ENCODE measurements at regions of chr4 and their contacts with region 1.

Region 1: GRCh38 chr4:118981839-118982381 is 93.3 kb downstream of the SYNPO2 start:
- DNase-seq: peak; percentile 96
- ATAC-seq: peak; percentile 89
- H3K4me3 ChIP-seq: no peak overlapping the region
- H3K27ac ChIP-seq: peak overlapping the region; percentile 21; the same call in 1 of the 2 replicates
- H3K4me1 ChIP-seq: peaks cover 18% of the 10 kb centered on the region
- H3K27me3 ChIP-seq: no peaks in the 10 kb centered on the region
- CTCF ChIP-seq: peak; percentile 92
- POLR2A ChIP-seq: no peak
- RAD21 ChIP-seq: peak; percentile 98

Region 2: DNA sequence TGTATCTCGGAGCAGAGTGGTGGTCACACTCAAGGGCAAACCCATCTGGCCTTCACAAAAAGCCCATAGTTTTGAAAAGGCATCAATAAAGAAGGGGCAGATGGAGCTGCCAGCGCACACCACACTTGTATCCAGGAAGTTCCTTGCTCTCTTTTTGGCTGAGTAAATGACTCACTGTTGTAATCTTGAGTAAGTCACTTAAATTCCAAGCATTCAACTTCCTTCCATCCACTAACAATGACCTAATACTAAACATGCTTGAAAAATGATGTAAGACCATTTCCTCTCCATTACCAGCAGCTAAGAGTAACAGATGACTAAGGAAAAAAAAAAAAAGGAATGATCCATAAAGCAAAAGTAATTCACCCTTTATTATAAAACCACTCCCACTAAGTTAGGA is 121.4 kb after region 1 on chr4:
- CTCF ChIA-PET with region 1: no interaction called
- POLR2A ChIA-PET with region 1: no interaction called
- dilution Hi-C with region 1: no loop called
- in situ Hi-C with region 1: no loop called
- intact Hi-C with region 1: loop called (anchors 5 kb)
- DNase-seq: peak; percentile 99
- ATAC-seq: peak; percentile 73
- H3K4me3 ChIP-seq: no peak overlapping the region
- H3K27ac ChIP-seq: peak overlapping the region; percentile 95
- H3K4me1 ChIP-seq: peaks cover 13% of the 10 kb centered on the region; the same call in 1 of the 2 replicates
- H3K27me3 ChIP-seq: no peaks in the 10 kb centered on the region
- CTCF ChIP-seq: no peak
- POLR2A ChIP-seq: no peak
- RAD21 ChIP-seq: no peak

Region 3: DNA sequence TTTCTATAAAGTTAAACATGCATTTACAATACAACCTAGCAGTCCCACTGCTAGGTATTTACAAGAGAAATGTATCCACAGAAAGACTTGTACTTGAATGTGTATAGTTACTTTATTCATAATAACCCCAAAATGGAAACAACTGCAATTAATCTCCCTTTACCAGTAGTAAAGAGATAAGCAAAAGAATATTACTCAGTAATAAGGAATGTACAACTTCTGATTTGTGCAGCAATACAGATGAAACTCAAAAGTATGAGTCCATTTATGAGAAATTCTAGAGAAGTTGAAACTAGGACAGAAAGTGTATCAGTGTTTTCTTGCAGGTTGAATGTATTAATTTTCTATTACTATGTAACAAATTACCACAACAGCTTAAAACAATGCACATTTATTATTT is 245.8 kb after region 1 on chr4:
- CTCF ChIA-PET with region 1: no interaction called
- POLR2A ChIA-PET with region 1: no interaction called
- dilution Hi-C with region 1: no loop called
- in situ Hi-C with region 1: no loop called
- intact Hi-C with region 1: loop called (anchors 5 kb)
- DNase-seq: peak; percentile 79
- ATAC-seq: peak; percentile 78
- H3K4me3 ChIP-seq: no peak overlapping the region
- H3K27ac ChIP-seq: no peak overlapping the region; the same call in 1 of the 2 replicates
- H3K4me1 ChIP-seq: peaks cover 10% of the 10 kb centered on the region
- H3K27me3 ChIP-seq: no peaks in the 10 kb centered on the region
- CTCF ChIP-seq: no peak
- POLR2A ChIP-seq: no peak
- RAD21 ChIP-seq: no peak

Region 4: DNA sequence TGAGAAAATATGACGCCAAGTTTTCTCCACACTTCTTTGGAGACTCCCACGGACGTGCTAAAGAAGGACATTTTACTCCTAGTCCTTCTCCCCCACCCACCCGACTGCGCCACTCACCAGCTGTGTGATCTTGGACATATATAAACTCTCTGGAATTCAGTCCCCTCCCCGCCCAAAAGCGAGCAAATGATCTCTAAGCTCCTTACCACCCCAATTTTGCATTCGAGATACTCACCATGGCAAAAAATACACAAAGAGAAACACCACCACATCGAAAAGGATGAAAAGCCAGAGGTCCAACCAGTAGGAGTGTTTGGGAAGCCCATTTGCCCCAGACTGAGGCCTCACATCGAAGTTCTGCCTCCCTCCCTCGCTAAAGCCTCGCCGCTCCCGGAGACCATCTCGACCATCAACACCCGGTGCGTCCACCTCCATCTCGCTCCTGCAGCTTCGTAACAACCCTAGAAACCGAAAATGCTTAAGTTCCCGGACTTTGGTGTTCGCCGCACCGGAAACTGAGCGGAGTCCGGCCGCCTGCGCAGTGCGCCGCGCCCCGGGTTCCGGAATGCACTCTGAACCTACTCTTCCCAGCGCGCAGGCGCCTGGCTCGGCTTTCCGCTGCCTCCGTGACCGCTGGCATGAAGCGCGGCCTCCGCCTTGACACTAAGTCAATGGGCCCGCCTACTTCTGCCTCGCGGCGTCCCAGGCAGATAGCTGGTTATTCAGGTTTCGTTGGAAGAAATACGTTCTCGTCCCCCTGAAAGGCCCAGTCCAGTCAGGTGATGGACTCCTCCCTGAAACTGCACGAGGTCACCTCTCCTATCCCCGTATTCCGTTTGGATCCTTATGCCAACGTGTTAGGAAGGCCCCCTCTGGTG is 318.4 kb after region 1 on chr4:
- CTCF ChIA-PET with region 1: no interaction called
- POLR2A ChIA-PET with region 1: no interaction called
- dilution Hi-C with region 1: loop called (anchors 10 kb)
- in situ Hi-C with region 1: no loop called
- intact Hi-C with region 1: loop called (anchors 1 kb)
- DNase-seq: peak; percentile 89
- ATAC-seq: peak; percentile 94
- H3K4me3 ChIP-seq: peak overlapping the region; percentile 70
- H3K27ac ChIP-seq: peak overlapping the region; percentile 90
- H3K4me1 ChIP-seq: no peaks in the 10 kb centered on the region; the same call in 1 of the 2 replicates
- H3K27me3 ChIP-seq: no peaks in the 10 kb centered on the region
- CTCF ChIP-seq: no peak
- POLR2A ChIP-seq: peak; percentile 88
- RAD21 ChIP-seq: no peak

Region 5: GRCh38 chr4:120049732-120050494 is 1068.0 kb after region 1 on chr4:
- CTCF ChIA-PET with region 1: no interaction called
- POLR2A ChIA-PET with region 1: no interaction called
- dilution Hi-C with region 1: no loop called
- in situ Hi-C with region 1: loop called (anchors 5 kb)
- intact Hi-C with region 1: loop called (anchors 2 kb)
- DNase-seq: peak; percentile 92
- ATAC-seq: peak; percentile 84
- H3K4me3 ChIP-seq: peak overlapping the region; percentile 21; the same call in 1 of the 2 replicates
- H3K27ac ChIP-seq: peak overlapping the region; percentile 85
- H3K4me1 ChIP-seq: peaks cover 4% of the 10 kb centered on the region
- H3K27me3 ChIP-seq: no peaks in the 10 kb centered on the region
- CTCF ChIP-seq: peak; percentile 87
- POLR2A ChIP-seq: no peak
- RAD21 ChIP-seq: peak; percentile 95

Measured in IMR-90 (cell line).